ENCODE measurements at regions of chr12 and their contacts with region 1.

Region 1: DNA sequence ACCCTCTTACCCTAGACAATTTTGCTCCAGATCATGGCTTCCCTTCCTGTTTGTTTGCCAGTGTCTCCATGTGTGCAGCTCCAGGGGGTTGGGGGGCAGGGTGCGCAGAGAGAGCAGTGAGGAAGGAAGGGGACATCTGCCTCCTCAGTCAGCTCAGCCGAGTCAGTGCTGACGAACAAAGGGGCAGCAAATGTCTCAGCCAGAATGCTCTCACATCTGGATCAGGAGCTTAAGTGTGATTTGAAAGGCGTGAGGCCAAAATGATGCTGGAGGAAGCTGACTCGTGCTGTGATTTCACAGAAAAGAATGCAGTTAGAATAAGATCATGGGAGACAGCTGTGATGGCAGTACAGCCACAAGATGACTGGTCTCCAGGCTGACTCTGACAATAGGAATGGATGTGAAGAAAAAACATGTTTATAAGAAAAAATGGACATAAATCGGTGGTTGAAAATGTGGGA is 27.1 kb upstream of the CDK17 start:
- DNase-seq: peak; percentile 100
- H3K4me3 ChIP-seq: peak overlapping the region; percentile 63
- H3K27ac ChIP-seq: peak overlapping the region; percentile 100
- H3K27me3 ChIP-seq: no peaks in the 10 kb centered on the region
- CTCF ChIP-seq: no peak

Region 2: DNA sequence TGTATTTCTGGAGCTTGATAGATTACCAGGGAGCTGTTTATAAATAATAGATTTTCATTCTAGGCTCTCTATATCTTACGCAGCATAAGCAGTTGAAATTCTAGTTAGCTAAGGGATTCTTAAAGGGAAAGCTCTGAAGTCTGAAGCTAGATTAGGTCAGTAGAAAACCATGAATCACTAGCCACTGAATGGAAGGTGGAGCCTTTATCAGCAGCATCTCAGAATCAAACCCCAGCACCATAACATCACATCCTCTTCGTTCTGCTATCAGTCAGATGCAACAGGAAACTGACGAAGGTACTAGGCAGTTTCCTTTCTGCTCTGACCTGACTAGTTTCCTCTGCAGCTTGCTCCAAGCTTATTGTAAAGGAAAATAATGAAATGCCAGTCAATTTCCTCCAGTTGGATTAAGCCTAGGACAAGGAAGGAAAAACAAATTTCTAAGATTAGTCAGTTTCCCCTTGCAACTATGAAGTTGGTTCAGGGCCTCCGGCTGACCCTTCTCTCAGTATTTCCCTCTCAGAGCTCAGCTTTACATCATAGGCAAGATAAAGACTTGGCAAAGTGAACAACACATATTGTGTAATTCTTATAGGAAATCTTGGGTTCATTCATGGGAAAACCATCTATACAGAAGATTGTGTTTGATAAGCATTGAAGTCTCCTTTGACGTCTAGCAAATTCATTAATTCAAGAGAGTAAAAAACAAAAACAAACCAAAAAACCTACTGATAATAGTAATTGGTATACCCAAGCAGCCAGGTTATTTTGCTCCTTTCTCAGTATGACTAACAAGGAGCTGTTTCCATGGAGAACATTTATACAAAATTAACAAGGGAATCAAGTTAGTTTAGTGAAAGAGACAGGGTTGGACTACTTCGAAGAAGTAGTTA is 18.6 kb after region 1 on chr12:
- CTCF ChIA-PET with region 1: no interaction called
- POLR2A ChIA-PET with region 1: interaction called, 16 read pairs
- DNase-seq: peak; percentile 79
- H3K4me3 ChIP-seq: peak overlapping the region; percentile 23
- H3K27ac ChIP-seq: peak overlapping the region; percentile 92
- H3K27me3 ChIP-seq: no peaks in the 10 kb centered on the region
- CTCF ChIP-seq: no peak

Region 3: GRCh38 chr12:96882862-96883261 is 455.6 kb after region 1 on chr12:
- CTCF ChIA-PET with region 1: no interaction called
- POLR2A ChIA-PET with region 1: no interaction called
- DNase-seq: peak; percentile 64
- H3K4me3 ChIP-seq: no peak overlapping the region
- H3K27ac ChIP-seq: no peak overlapping the region
- H3K27me3 ChIP-seq: no peaks in the 10 kb centered on the region
- CTCF ChIP-seq: no peak